ENCODE measurements at regions of chr2 and their contacts with region 1.

Region 1: GRCh38 chr2:148726228-148726627 is 81.7 kb downstream of the EPC2 start:
- DNase-seq: no peak
- ATAC-seq: no peak
- H3K4me3 ChIP-seq: no peak overlapping the region
- H3K27ac ChIP-seq: no peak overlapping the region
- H3K4me1 ChIP-seq: 0 out of 2 replicates have a peak, but pooled peaks cover 3% of the 10 kb centered on the region
- H3K27me3 ChIP-seq: no peaks in the 10 kb centered on the region
- CTCF ChIP-seq: no peak
- EP300 ChIP-seq: no peak
- POLR2A ChIP-seq: no peak
- RAD21 ChIP-seq: no peak

Region 2: GRCh38 chr2:148244587-148245292 is 481.5 kb before region 1 on chr2:
- CTCF ChIA-PET with region 1: no interaction called
- POLR2A ChIA-PET with region 1: no interaction called
- in situ Hi-C with region 1: no loop called
- intact Hi-C with region 1: no loop called
- DNase-seq: peak; percentile 21
- ATAC-seq: peak; percentile 77
- H3K4me3 ChIP-seq: no peak overlapping the region
- H3K27ac ChIP-seq: no peak overlapping the region
- H3K4me1 ChIP-seq: peaks cover 13% of the 10 kb centered on the region
- H3K27me3 ChIP-seq: no peaks in the 10 kb centered on the region
- CTCF ChIP-seq: no peak
- EP300 ChIP-seq: peak in 1 of 2 experiments; percentile 45; a peak in 1 of 4 replicates
- POLR2A ChIP-seq: no peak
- RAD21 ChIP-seq: no peak

Region 3: DNA sequence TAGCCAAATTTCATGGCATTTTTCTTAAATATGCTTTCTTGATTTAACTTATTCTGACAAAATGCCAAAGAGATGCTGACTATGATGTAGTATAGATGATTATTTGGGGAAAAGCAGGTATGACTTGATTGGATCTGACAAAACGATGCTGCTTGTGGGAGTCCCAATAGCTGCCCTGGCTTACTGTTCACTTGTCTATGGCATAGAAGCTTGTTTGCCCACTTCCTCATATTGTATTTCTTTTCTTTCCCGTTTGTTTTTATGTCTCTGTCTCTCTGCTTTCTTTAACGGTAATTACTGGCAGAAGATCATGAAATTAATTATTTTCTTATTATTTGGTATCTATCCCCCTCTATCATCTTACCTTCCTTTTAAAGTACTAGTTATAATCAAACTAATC is 38.7 kb before region 1 on chr2:
- CTCF ChIA-PET with region 1: no interaction called
- POLR2A ChIA-PET with region 1: no interaction called
- in situ Hi-C with region 1: no loop called
- intact Hi-C with region 1: loop called (anchors 5 kb)
- DNase-seq: no peak
- ATAC-seq: no peak
- H3K4me3 ChIP-seq: no peak overlapping the region
- H3K27ac ChIP-seq: no peak overlapping the region
- H3K4me1 ChIP-seq: no peaks in the 10 kb centered on the region
- H3K27me3 ChIP-seq: no peaks in the 10 kb centered on the region
- CTCF ChIP-seq: no peak
- EP300 ChIP-seq: no peak
- POLR2A ChIP-seq: no peak
- RAD21 ChIP-seq: no peak

Region 4: DNA sequence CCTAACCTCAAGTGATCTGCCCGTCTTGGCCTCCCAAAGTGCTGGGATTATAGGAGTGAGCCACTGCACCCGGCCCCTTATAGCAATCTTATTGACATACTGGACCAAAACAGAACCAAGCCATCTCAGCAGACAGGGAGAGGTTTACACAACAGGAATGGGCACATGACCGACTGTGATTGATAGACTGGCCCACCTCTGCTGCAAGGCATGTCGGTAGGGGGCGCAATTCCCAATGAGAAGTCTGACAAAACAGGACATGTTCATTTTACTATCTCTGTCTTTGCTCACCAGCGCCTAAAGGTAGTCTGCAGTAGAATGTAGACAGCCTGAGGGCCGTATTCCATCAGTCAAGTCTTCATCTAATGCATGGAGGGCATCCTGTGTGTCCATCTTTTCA is 314.2 kb after region 1 on chr2:
- CTCF ChIA-PET with region 1: no interaction called
- POLR2A ChIA-PET with region 1: no interaction called
- in situ Hi-C with region 1: no loop called
- intact Hi-C with region 1: no loop called
- DNase-seq: peak; percentile 24
- ATAC-seq: peak; percentile 29
- H3K4me3 ChIP-seq: no peak overlapping the region
- H3K27ac ChIP-seq: no peak overlapping the region
- H3K4me1 ChIP-seq: peaks cover 11% of the 10 kb centered on the region; the same call in 1 of the 2 replicates
- H3K27me3 ChIP-seq: peaks cover 1 to 29% of the 10 kb centered on the region in 2 experiments; a peak in 4 of 5 replicates
- CTCF ChIP-seq: peak; percentile 58
- EP300 ChIP-seq: no peak
- POLR2A ChIP-seq: no peak
- RAD21 ChIP-seq: no peak